ENCODE measurements at regions of chr6 and their contacts with region 1.

Region 1: DNA sequence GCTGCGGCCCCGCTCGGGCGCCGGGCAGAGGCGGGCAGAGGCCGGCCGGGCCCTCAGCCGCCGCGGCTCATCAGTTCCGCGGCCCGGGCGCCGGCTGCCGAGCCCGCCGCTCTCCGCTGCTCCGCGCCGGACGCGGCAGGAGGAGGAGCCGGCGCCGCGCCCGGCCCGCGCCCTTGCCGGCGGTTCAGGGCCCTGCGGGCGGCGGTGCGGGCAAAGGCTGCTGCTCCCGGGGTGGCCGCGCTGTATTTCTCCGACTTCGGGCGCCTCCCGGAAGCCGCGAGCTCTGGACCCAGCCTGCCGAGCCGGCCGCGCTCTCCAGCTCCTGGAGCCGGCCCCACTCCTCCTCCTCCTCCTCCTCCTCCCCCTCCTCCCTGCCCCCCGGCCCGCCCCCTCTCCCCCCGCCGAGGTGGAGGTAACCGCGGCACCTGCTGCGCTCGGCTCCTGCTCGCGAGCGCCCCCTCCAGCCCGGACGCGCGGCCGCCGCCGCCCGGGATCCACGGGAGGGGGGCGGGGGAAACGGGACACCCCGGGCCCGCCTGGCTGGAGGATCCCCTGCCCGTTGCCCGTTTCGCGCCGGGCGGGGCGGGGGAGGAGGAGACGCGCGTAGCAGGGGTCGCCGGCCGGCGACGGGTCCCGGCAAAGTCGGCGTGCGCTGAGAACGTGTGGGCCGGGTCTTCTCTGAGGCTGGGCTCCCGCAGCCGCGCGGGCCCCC is at the start of gene SLC22A23:
- DNase-seq: no peak
- ATAC-seq: peak; percentile 81
- H3K4me3 ChIP-seq: peak within 1 kb of the TSS; percentile 48 to 52
- H3K27ac ChIP-seq: no peak within 1 kb of the TSS
- H3K4me1 ChIP-seq: peaks cover 16% of the 10 kb centered on the region
- H3K27me3 ChIP-seq: peaks cover 15% of the 10 kb centered on the region
- CTCF ChIP-seq: peak; percentile 97
- total RNA-seq, gene SLC22A23: 4.5 TPM

Region 2: GRCh38 chr6:2307799-2308198 is 1149.1 kb before region 1 on chr6:
- CTCF ChIA-PET with region 1: no interaction called
- POLR2A ChIA-PET with region 1: no interaction called
- in situ Hi-C with region 1: no loop called
- intact Hi-C with region 1: no loop called
- DNase-seq: no peak
- ATAC-seq: no peak
- H3K4me3 ChIP-seq: no peak overlapping the region
- H3K27ac ChIP-seq: no peak overlapping the region
- H3K4me1 ChIP-seq: no peaks in the 10 kb centered on the region
- H3K27me3 ChIP-seq: no peaks in the 10 kb centered on the region
- CTCF ChIP-seq: no peak

Region 3: DNA sequence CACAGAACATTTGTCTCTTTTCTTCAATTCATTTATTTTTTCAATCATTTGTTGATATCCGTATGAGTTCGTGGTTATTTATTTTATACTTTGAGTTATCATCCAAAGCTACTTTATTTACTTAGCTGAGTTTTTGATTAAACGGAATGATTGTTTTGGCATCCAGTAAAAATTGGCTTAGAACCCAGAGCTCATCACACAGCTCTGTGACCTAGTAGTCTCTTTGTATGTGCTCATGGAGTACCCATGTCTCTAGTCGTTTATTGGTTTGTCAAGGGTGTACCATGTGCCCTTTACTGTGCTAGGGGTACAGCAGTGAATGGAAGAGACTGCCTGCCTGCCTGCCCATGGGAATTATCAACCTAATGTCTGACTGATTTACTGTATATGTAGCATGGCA is 848.4 kb before region 1 on chr6:
- CTCF ChIA-PET with region 1: no interaction called
- POLR2A ChIA-PET with region 1: no interaction called
- in situ Hi-C with region 1: no loop called
- intact Hi-C with region 1: no loop called
- DNase-seq: no peak
- ATAC-seq: no peak
- H3K4me3 ChIP-seq: no peak overlapping the region
- H3K27ac ChIP-seq: no peak overlapping the region
- H3K4me1 ChIP-seq: no peaks in the 10 kb centered on the region
- H3K27me3 ChIP-seq: no peaks in the 10 kb centered on the region
- CTCF ChIP-seq: no peak

Region 4: DNA sequence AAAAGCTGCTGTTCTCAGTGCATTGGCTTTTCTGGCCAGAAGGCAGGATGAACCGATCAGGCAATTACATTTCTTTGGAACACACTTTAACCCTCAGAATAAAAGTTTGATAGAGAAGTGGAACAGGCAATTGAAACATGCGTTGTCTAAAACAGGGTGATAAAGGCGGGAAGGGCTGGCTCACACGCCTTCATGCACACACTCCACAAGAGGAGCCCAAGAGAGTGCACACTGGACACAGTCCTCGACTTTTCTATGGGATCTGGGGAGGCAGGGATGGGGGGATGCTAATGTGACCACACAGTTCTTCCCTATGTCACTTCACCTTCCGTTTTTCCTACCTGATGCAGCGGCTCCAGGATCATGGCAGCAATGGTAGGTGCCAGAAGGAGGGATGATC is 268.6 kb before region 1 on chr6:
- CTCF ChIA-PET with region 1: interaction called, 10 read pairs
- POLR2A ChIA-PET with region 1: no interaction called
- in situ Hi-C with region 1: no loop called
- intact Hi-C with region 1: no loop called
- DNase-seq: no peak
- ATAC-seq: no peak
- H3K4me3 ChIP-seq: no peak overlapping the region
- H3K27ac ChIP-seq: no peak overlapping the region
- H3K4me1 ChIP-seq: no peaks in the 10 kb centered on the region
- H3K27me3 ChIP-seq: peaks cover 3% of the 10 kb centered on the region; the same call in 1 of the 2 replicates
- CTCF ChIP-seq: no peak

Region 5: DNA sequence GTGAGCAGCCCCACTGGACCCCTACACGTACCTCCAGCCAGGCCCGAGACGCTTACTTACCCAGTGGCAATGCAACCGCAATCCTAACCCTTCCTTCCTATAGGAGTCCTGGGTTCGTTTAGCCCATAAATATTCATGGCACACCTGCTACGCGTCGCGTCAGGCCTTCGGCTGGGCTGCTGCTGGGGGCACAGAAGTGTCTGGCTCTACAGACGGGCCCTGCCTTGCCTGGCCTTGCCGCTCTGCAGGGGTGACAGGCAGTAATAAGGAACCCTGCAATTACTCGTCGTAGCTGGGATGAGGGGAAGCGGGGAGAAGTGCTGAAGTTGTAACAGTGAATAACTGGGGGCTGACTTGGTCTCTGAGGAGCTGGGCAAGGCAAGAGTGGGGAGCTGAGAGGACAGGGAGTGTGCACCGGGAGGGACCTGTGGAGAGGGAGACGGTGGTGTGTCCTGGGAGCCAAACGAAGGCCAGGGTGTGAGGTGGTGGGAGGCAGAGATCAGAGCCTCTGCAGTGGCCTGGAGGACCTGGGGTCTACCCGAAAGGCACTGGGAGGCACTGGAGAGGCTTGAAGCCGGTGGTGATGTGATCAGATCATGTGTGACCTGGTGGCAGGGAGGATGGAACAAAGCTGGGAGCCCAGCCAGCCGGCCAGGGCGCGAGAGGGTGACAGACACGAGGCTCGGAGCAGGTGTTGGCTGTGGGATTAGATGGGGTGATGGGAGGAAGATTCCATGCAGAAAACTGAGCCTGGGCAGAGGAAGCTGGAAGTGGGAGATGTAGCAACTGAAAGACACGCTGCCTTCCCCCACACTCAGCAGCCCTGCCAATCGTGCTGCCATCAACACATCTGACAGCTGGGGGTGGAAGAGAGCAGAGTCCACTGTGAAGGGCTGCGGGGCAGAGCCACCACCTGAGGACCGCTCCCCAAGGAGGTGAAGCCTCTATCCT is 161.7 kb before region 1 on chr6:
- CTCF ChIA-PET with region 1: no interaction called
- POLR2A ChIA-PET with region 1: no interaction called
- in situ Hi-C with region 1: no loop called
- intact Hi-C with region 1: loop called (anchors 10 kb)
- DNase-seq: no peak
- ATAC-seq: peak; percentile 60; the same call in 1 of the 2 replicates
- H3K4me3 ChIP-seq: no peak overlapping the region
- H3K27ac ChIP-seq: no peak overlapping the region
- H3K4me1 ChIP-seq: peaks cover 15% of the 10 kb centered on the region
- H3K27me3 ChIP-seq: no peaks in the 10 kb centered on the region
- CTCF ChIP-seq: no peak

Region 6: GRCh38 chr6:3336066-3336786 is 120.7 kb before region 1 on chr6:
- CTCF ChIA-PET with region 1: interaction called, 13 read pairs
- POLR2A ChIA-PET with region 1: no interaction called
- in situ Hi-C with region 1: no loop called
- intact Hi-C with region 1: no loop called
- DNase-seq: no peak
- ATAC-seq: no peak
- H3K4me3 ChIP-seq: no peak overlapping the region
- H3K27ac ChIP-seq: no peak overlapping the region
- H3K4me1 ChIP-seq: 0 out of 2 replicates have a peak, but pooled peaks cover 4% of the 10 kb centered on the region
- H3K27me3 ChIP-seq: 0 out of 2 replicates have a peak, but pooled peaks cover under 1% of the 10 kb centered on the region
- CTCF ChIP-seq: no peak

Region 7: DNA sequence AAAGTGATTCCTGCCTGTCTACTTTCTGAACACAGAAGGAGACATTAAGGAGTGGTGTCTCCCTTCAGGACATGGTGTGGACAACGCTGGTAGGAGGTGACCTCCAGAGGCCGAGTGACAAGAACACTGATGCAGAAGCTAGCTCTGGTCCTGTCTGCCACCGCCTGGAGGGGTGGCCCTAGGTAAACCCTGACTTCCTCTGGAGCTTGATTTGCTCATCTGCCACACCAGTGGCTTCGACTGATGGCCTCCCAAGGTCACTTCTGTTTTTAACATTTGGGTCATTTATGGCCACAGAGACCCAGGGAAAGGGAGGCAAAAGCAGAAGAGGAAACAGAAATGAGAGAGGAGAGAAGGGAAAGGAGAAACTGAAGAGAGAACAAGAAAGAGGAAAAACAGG is 49.3 kb after region 1 on chr6:
- CTCF ChIA-PET with region 1: no interaction called
- POLR2A ChIA-PET with region 1: no interaction called
- in situ Hi-C with region 1: no loop called
- intact Hi-C with region 1: no loop called
- DNase-seq: no peak
- ATAC-seq: no peak
- H3K4me3 ChIP-seq: no peak overlapping the region
- H3K27ac ChIP-seq: no peak overlapping the region
- H3K4me1 ChIP-seq: no peaks in the 10 kb centered on the region
- H3K27me3 ChIP-seq: peaks cover 5% of the 10 kb centered on the region
- CTCF ChIP-seq: no peak

Region 8: DNA sequence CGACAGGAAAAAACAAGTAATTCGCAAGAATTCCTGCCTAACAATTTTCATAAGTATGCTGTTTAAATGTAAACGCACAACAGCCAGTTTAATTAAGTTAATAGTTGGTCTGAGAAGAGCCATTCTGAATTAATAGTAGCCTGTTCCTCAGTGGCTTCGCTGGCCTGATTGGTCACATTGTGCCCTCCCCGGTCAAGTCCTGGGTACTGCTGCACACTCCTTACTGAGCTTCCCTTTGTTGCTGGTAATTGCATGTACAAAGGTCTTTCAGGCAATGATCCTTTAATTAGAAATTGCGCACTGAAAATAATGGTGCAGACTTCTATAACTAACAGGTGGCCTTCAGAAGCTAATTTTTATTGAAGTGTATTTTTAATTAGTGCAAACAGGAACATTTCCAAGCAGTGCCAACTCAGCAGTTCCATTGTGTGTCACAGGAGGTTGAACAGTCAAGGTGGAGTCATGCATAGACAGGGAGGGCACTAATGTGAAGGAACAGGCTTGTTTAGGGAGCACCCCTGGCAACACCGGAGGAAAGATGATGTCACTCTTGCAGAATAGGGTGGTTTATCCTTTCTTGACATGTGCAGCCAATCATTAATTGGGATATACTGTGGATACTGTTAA is 92.5 kb after region 1 on chr6:
- CTCF ChIA-PET with region 1: no interaction called
- POLR2A ChIA-PET with region 1: no interaction called
- in situ Hi-C with region 1: no loop called
- intact Hi-C with region 1: no loop called
- DNase-seq: no peak
- ATAC-seq: no peak
- H3K4me3 ChIP-seq: no peak overlapping the region
- H3K27ac ChIP-seq: no peak overlapping the region
- H3K4me1 ChIP-seq: no peaks in the 10 kb centered on the region
- H3K27me3 ChIP-seq: peaks cover 13% of the 10 kb centered on the region
- CTCF ChIP-seq: 0 out of 2 replicates have a peak, but pooled peaks have one; percentile 7

Region 9: DNA sequence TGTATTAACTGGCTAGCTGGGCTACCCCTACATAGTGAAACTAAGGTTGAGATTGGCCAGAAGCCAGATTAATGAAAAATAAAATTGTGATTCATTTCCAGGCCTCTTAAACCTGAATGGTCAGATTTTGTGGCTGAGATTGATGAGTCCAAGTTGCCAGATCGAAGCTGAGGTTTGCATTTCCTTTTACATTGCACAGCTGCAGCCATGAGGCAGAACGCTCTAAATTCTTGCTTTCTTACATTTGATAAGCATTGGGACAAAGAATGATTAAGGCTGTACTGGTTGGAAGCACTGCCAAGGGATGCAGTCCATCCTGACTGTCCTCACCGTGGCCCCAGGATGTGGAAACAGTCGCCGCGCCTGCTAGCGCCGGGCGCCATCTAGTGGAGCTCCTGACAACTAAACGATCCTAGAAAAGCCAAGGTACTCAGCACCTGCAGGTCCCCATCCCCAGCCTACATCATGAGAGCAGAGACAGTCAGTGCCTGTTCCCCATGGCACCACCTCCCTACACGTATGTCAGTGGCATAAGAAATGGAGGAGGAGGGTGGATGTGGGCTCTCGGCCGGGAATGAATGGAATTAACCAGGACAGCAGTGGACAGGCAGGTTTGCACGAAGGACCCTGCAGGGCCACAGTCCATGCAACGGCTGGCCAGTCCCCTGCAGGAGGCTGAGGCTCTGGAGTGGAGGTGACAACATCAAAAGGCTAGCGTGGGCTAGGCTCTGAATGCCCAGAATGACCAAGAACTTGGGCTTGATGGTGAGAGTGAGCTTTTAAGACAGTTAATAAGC is 275.6 kb after region 1 on chr6:
- CTCF ChIA-PET with region 1: no interaction called
- POLR2A ChIA-PET with region 1: no interaction called
- in situ Hi-C with region 1: no loop called
- intact Hi-C with region 1: loop called (anchors 10 kb)
- DNase-seq: no peak
- ATAC-seq: peak; percentile 90
- H3K4me3 ChIP-seq: no peak overlapping the region
- H3K27ac ChIP-seq: no peak overlapping the region
- H3K4me1 ChIP-seq: no peaks in the 10 kb centered on the region
- H3K27me3 ChIP-seq: no peaks in the 10 kb centered on the region
- CTCF ChIP-seq: peak; percentile 96

Measured in Panc1 (cell line).